Common myeloid progenitor, CD34-positive (primary cell): ENCODE measurements at regions of chr16 and their contacts with region 1.

Region 1: GRCh38 chr16:81006814-81007696 is at the starts of genes CENPN and CMC2:
- DNase-seq: peak; percentile 99 to 100 (median 99)
- H3K4me3 ChIP-seq: peak within 1 kb of the TSS; percentile 89 to 97 (median 92)
- H3K27ac ChIP-seq: peak within 1 kb of the TSS; percentile 98 to 99
- H3K4me1 ChIP-seq: peaks cover 8 to 38% (median 30%) of the 10 kb centered on the region in 4 experiments
- H3K27me3 ChIP-seq: no peaks in the 10 kb centered on the region

Region 2: GRCh38 chr16:80989801-80990200 is 17.3 kb before region 1 on chr16:
- CTCF ChIA-PET with region 1: interaction called, 12 read pairs
- POLR2A ChIA-PET with region 1: interaction called, 3 read pairs
- DNase-seq: no peak
- H3K4me3 ChIP-seq: no peak overlapping the region
- H3K27ac ChIP-seq: no peak overlapping the region
- H3K4me1 ChIP-seq: peaks cover 0 to 8% (median 5%) of the 10 kb centered on the region in 4 experiments
- H3K27me3 ChIP-seq: no peaks in the 10 kb centered on the region

Region 3: DNA sequence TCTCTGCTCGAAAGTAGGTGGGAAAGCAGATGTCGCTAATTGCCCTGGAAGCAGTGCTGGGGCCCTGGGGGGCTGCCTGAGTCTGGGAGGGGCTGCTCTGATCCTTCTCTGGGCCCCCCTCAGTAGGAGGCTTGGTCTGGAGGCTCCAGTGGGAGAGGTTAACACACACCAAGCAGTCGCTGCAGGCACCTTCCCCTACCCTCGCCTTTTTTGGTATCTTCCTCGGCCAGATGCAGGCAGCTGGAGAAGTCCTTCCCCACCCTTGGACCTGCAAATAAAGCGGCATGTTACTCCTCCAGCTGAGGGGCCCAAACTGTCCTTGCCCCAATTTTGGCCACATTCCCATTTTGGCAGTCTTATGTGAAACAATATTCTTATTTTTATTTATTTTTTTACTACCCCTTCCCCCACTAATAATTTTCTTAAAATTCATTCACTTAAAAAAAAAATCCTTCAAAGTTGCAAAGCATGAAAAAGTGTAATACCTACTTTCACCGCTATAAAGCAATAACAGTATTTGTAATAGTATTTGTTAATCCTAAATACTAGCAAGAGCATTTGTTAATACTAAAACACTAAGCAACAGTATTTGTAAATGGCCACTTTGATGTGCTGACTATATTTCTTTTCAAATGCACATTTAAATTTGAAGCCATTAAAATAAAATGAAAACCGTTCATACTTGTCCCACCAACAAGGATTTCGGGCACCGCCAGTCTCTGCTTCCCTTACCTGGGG is 55.0 kb after region 1 on chr16:
- CTCF ChIA-PET with region 1: no interaction called
- POLR2A ChIA-PET with region 1: no interaction called
- DNase-seq: no peak
- H3K4me3 ChIP-seq: no peak overlapping the region
- H3K27ac ChIP-seq: no peak overlapping the region
- H3K4me1 ChIP-seq: no peaks in the 10 kb centered on the region
- H3K27me3 ChIP-seq: no peaks in the 10 kb centered on the region

Region 4: GRCh38 chr16:81189100-81189664 is 182.1 kb after region 1 on chr16:
- CTCF ChIA-PET with region 1: no interaction called
- POLR2A ChIA-PET with region 1: no interaction called
- DNase-seq: no peak
- H3K4me3 ChIP-seq: no peak overlapping the region
- H3K27ac ChIP-seq: no peak overlapping the region
- H3K4me1 ChIP-seq: no peaks in the 10 kb centered on the region
- H3K27me3 ChIP-seq: peaks cover 0 to 11% (median 0%) of the 10 kb centered on the region in 5 experiments